ENCODE measurements at regions of chr1 and their contacts with region 1.

Region 1: GRCh38 chr1:196660852-196661251 is 9.0 kb downstream of the CFH start:
- DNase-seq: peak in 2 of 5 donors; percentile 11 to 13
- H3K4me3 ChIP-seq: no peak overlapping the region
- H3K4me3 Mint-ChIP-seq: peak overlapping the region in 6 of 7 donors; percentile 16 to 52 (median 34)
- H3K27ac ChIP-seq: no peak overlapping the region
- H3K27ac Mint-ChIP-seq: peak overlapping the region in 1 of 8 donors; percentile 2
- H3K4me1 ChIP-seq: no peaks in the 10 kb centered on the region
- H3K4me1 Mint-ChIP-seq: peaks cover 13 to 23% (median 13%) of the 10 kb centered on the region in 3 donors
- H3K27me3 ChIP-seq: no peaks in the 10 kb centered on the region
- H3K27me3 Mint-ChIP-seq: no peaks in the 10 kb centered on the region

Region 2: GRCh38 chr1:196148367-196148970 is 512.4 kb before region 1 on chr1:
- CTCF ChIA-PET with region 1: interaction called, 11 read pairs
- POLR2A ChIA-PET with region 1: no interaction called
- DNase-seq: no peak
- H3K4me3 ChIP-seq: no peak overlapping the region
- H3K4me3 Mint-ChIP-seq: no peak overlapping the region
- H3K27ac ChIP-seq: no peak overlapping the region
- H3K27ac Mint-ChIP-seq: peak overlapping the region in 1 of 8 donors; percentile 24
- H3K4me1 ChIP-seq: no peaks in the 10 kb centered on the region
- H3K4me1 Mint-ChIP-seq: no peaks in the 10 kb centered on the region
- H3K27me3 ChIP-seq: no peaks in the 10 kb centered on the region
- H3K27me3 Mint-ChIP-seq: no peaks in the 10 kb centered on the region

Region 3: GRCh38 chr1:196638466-196638865 is 22.4 kb before region 1 on chr1:
- CTCF ChIA-PET with region 1: no interaction called
- POLR2A ChIA-PET with region 1: no interaction called
- DNase-seq: no peak
- H3K4me3 ChIP-seq: no peak overlapping the region
- H3K4me3 Mint-ChIP-seq: no peak overlapping the region
- H3K27ac ChIP-seq: no peak overlapping the region
- H3K27ac Mint-ChIP-seq: no peak overlapping the region
- H3K4me1 ChIP-seq: no peaks in the 10 kb centered on the region
- H3K4me1 Mint-ChIP-seq: no peaks in the 10 kb centered on the region
- H3K27me3 ChIP-seq: no peaks in the 10 kb centered on the region
- H3K27me3 Mint-ChIP-seq: peaks cover 0 to 4% of the 10 kb centered on the region in 2 donors

Region 4: GRCh38 chr1:196732526-196732925 is 71.7 kb after region 1 on chr1:
- CTCF ChIA-PET with region 1: no interaction called
- POLR2A ChIA-PET with region 1: no interaction called
- DNase-seq: no peak
- H3K4me3 ChIP-seq: no peak overlapping the region
- H3K4me3 Mint-ChIP-seq: no peak overlapping the region
- H3K27ac ChIP-seq: no peak overlapping the region
- H3K27ac Mint-ChIP-seq: no peak overlapping the region
- H3K4me1 ChIP-seq: no peaks in the 10 kb centered on the region
- H3K4me1 Mint-ChIP-seq: no peaks in the 10 kb centered on the region
- H3K27me3 ChIP-seq: no peaks in the 10 kb centered on the region
- H3K27me3 Mint-ChIP-seq: no peaks in the 10 kb centered on the region

Measured in CD8-positive, alpha-beta memory T cell (primary cell).